ENCODE measurements at regions of chr9 and their contacts with region 1.

Region 1: DNA sequence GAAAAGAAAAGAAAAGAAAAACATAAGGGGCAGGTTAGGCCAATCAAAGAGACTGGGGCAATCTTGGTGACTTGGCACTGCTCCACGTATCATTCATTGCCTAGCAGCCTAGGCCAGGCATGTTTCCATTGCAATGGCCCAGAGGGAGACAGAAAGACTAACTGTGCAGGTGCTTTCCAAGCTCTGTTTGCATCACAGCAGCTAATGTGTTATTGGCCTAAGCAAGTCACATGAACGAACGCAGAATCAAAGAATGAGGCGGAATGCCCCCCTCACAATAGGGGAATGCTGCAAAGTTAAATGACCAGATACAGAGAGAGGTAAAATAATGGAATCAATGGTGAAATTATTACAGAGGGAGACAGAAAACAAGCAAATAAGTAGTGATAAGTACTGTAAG is 11.1 kb upstream of the VPS13A start:
- DNase-seq: no peak
- H3K4me3 ChIP-seq: no peak overlapping the region
- H3K27ac ChIP-seq: no peak overlapping the region
- H3K4me1 ChIP-seq: no peaks in the 10 kb centered on the region
- H3K27me3 ChIP-seq: peaks cover 0 to under 1% (median 0%) of the 10 kb centered on the region in 5 experiments

Region 2: DNA sequence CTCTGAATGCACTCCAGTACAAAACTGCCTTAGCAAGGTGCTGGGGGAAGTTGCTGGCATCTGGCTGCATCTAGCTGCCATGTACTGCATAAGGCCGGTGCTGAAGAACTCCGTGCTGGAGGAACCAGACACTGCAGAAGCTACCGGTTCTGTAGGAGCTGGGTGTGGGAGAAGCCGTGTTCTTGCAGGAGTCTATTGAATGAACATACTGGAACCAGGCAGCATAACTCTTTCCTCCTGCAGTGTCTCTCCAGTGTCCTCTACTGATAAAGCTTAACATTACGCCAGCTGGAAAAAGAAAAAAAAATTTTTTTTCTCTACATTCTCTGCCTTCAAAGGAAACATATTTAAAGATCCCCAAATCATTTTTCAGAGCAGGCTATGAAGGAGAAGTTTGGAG is 49.7 kb after region 1 on chr9:
- CTCF ChIA-PET with region 1: interaction called, 15 read pairs
- POLR2A ChIA-PET with region 1: interaction called, 3 read pairs
- DNase-seq: peak; percentile 3 to 21 (median 12)
- H3K4me3 ChIP-seq: no peak overlapping the region
- H3K27ac ChIP-seq: no peak overlapping the region
- H3K4me1 ChIP-seq: no peaks in the 10 kb centered on the region
- H3K27me3 ChIP-seq: no peaks in the 10 kb centered on the region

Region 3: GRCh38 chr9:77221431-77221830 is 55.2 kb after region 1 on chr9:
- CTCF ChIA-PET with region 1: interaction called, 15 read pairs
- POLR2A ChIA-PET with region 1: no interaction called
- DNase-seq: no peak
- H3K4me3 ChIP-seq: no peak overlapping the region
- H3K27ac ChIP-seq: no peak overlapping the region
- H3K4me1 ChIP-seq: no peaks in the 10 kb centered on the region
- H3K27me3 ChIP-seq: no peaks in the 10 kb centered on the region